ENCODE measurements at regions of chr18 and their contacts with region 1.

Region 1: DNA sequence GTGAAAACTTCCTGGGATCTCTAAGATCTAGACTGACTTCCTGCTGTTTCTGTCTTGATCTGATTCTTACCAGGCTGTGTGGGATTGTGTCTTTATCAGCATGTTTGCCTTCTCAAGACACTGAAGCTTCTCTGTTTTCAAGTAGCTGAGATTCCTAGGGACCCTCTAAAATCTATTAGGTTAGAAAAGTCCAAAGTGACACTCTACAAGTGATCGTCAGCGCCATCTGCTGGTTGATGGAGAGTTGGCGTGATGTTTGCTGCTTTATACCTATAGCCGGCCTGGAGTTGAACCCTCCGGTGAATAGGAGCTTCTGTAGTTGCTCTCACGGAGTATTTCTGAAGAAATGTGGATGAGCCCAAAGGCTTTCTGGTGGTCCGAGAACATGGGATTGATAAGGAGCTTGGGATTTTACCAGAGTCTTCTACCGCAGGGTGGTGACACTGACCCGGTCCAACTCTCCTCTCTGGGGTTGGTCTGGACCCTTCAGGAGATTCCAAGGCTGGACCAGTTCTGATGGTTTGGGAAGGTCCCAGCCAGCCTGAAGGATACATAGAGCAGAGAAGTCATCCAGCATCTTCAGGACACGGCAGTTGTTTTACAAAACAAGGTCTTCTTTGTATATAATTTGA is 96.0 kb upstream of the TTC39C start:
- DNase-seq: peak; percentile 49
- ATAC-seq: peak; percentile 66
- H3K4me3 Mint-ChIP-seq: no peak overlapping the region
- H3K27ac Mint-ChIP-seq: no peak overlapping the region
- H3K4me1 Mint-ChIP-seq: peaks cover 4% of the 10 kb centered on the region
- H3K27me3 Mint-ChIP-seq: peaks cover 2% of the 10 kb centered on the region
- CTCF ChIP-seq: peak; percentile 54

Region 2: GRCh38 chr18:22813648-22814328 is 1104.7 kb before region 1 on chr18:
- CTCF ChIA-PET with region 1: no interaction called
- POLR2A ChIA-PET with region 1: no interaction called
- intact Hi-C with region 1: loop called (anchors 5 kb)
- DNase-seq: no peak
- ATAC-seq: peak; percentile 56
- H3K4me3 Mint-ChIP-seq: no peak overlapping the region
- H3K27ac Mint-ChIP-seq: no peak overlapping the region
- H3K4me1 Mint-ChIP-seq: no peaks in the 10 kb centered on the region
- H3K27me3 Mint-ChIP-seq: peaks cover 8% of the 10 kb centered on the region
- CTCF ChIP-seq: no peak

Region 3: DNA sequence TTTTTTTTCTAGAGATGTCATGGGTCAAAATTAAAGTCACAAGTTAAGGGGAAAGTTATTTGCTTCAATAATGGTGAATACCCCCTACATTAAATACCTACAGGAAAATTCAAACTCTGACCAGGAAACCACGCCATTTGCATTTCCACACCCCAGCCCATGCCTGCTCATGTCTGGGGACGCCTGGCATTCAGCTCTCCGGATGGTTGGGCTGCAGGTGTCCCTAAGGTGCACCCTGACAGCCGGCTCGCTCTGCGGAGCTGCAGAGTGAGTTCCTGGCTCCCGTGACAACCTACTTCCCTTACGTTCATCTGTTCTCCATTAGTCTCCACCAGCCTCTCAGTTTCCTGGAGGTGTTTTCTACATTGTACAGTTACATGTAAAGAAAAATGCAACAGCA is 588.1 kb before region 1 on chr18:
- CTCF ChIA-PET with region 1: no interaction called
- POLR2A ChIA-PET with region 1: no interaction called
- intact Hi-C with region 1: no loop called
- DNase-seq: peak; percentile 29
- ATAC-seq: peak; percentile 96
- H3K4me3 Mint-ChIP-seq: peak overlapping the region; percentile 47
- H3K27ac Mint-ChIP-seq: peak overlapping the region; percentile 50
- H3K4me1 Mint-ChIP-seq: peaks cover 28% of the 10 kb centered on the region
- H3K27me3 Mint-ChIP-seq: no peaks in the 10 kb centered on the region
- CTCF ChIP-seq: no peak

Region 4: DNA sequence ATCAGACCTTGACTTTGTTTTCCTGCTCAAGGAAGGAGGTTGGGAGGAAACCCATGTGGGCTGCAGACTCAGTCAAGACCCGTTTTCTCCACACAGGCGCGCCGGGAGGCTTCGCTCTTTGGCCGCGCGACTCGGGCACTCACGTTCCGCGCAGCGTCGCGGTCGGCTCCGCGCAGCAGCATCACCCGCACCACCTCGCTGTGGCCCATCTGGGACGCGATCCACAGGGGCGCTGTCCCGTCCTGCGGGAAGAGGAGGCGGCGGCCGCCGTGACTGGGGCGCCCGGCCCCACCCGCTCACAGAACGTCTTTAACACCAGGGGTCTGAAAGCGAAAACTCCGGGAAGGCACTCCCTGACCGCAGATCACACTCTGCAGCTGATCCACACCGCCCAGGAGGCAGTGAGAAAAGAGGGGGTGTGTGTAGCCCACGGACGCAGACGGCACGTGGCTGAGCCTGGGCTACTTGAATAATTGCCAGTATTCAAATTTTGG is 299.1 kb before region 1 on chr18:
- CTCF ChIA-PET with region 1: interaction called, 31 read pairs
- POLR2A ChIA-PET with region 1: no interaction called
- intact Hi-C with region 1: loop called (anchors 1 kb)
- DNase-seq: peak; percentile 18
- ATAC-seq: peak; percentile 36
- H3K4me3 Mint-ChIP-seq: peak overlapping the region; percentile 63
- H3K27ac Mint-ChIP-seq: no peak overlapping the region
- H3K4me1 Mint-ChIP-seq: peaks cover 17% of the 10 kb centered on the region
- H3K27me3 Mint-ChIP-seq: peaks cover 34% of the 10 kb centered on the region
- CTCF ChIP-seq: no peak

Region 5: DNA sequence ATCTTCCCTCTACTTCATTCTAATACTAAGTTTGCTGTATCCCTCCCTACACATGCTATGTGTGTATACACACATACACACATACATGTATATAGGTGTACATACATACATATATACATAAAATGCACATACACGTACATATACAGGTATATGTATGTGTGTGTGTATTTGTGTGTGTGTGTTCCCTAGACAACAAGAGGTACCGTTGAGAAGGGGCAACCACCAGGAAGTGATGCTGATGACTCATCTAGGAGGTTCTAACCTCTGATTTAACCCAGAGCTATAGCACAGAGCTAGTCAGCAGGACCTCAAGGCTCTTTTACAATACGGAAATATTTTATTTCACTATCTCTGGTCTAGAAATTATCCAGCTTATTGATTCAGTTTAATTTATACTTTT is 90.1 kb before region 1 on chr18:
- CTCF ChIA-PET with region 1: interaction called, 4 read pairs
- POLR2A ChIA-PET with region 1: no interaction called
- intact Hi-C with region 1: loop called (anchors 2 kb)
- DNase-seq: no peak
- ATAC-seq: peak; percentile 95
- H3K4me3 Mint-ChIP-seq: no peak overlapping the region
- H3K27ac Mint-ChIP-seq: no peak overlapping the region
- H3K4me1 Mint-ChIP-seq: no peaks in the 10 kb centered on the region
- H3K27me3 Mint-ChIP-seq: peaks cover under 1% of the 10 kb centered on the region
- CTCF ChIP-seq: no peak

Region 6: DNA sequence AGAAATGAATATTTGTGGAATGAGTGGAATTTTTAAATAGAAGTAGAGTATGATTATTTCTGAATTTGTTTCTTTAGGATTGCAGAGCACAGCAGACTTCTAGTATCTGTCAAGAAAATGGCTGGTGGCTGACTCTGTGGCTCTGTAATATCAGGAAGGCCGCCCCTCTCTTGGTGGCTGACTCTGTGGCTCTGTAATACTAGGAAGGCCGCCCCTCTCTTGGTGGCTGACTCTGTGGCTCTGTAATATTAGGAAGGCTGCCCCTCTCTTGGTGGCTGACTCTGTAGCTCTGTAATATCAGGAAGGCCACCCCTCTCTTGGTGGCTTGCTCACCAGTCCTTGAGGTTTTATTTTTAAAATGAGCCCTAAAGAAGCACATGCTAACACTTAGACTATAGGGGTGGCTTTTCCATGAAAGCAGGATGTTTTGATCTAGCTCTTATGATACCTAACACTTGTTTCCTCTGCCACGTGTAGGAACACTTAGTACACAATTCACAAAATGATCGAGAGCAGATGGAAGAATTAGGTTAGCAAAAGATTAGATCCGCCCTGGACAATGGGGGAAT is 10.9 kb after region 1 on chr18:
- CTCF ChIA-PET with region 1: interaction called, 17 read pairs
- POLR2A ChIA-PET with region 1: no interaction called
- intact Hi-C with region 1: no loop called
- DNase-seq: no peak
- ATAC-seq: no peak
- H3K4me3 Mint-ChIP-seq: no peak overlapping the region
- H3K27ac Mint-ChIP-seq: no peak overlapping the region
- H3K4me1 Mint-ChIP-seq: peaks cover 5% of the 10 kb centered on the region
- H3K27me3 Mint-ChIP-seq: no peaks in the 10 kb centered on the region
- CTCF ChIP-seq: no peak

Region 7: DNA sequence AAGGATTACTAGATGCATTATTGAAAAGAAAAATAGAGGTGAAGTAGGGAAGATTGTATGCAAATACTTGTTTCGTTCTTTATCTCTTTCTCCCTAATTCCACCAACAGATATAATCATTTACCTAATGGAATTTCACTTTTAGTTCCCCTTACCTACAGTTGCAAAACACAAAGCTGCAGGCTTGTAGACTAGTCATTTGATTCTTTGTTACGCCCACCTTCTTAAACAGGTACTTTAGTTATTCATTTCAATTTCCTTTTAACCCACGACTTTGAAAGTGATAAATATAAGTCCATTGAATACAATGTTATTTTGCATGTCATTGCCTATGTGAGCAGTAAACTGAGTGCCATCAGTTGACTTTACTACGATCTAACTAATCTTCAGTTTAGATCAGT is 538.0 kb after region 1 on chr18:
- CTCF ChIA-PET with region 1: no interaction called
- POLR2A ChIA-PET with region 1: no interaction called
- intact Hi-C with region 1: no loop called
- DNase-seq: no peak
- ATAC-seq: no peak
- H3K4me3 Mint-ChIP-seq: no peak overlapping the region
- H3K27ac Mint-ChIP-seq: no peak overlapping the region
- H3K4me1 Mint-ChIP-seq: no peaks in the 10 kb centered on the region
- H3K27me3 Mint-ChIP-seq: no peaks in the 10 kb centered on the region
- CTCF ChIP-seq: no peak